ENCODE measurements at regions of chr15 and their contacts with region 1.

Region 1: GRCh38 chr15:28901987-28902745 is 16.4 kb downstream of the APBA2 start:
- DNase-seq: no peak
- ATAC-seq: no peak
- H3K4me3 Mint-ChIP-seq: peak overlapping the region in 6 of 10 donors; percentile 25 to 52 (median 40)
- H3K27ac Mint-ChIP-seq: peak overlapping the region in 9 of 10 donors; percentile 22 to 91 (median 76)
- H3K4me1 Mint-ChIP-seq: peaks cover 55 to 95% (median 89%) of the 10 kb centered on the region in 4 donors
- H3K27me3 Mint-ChIP-seq: no peaks in the 10 kb centered on the region

Region 2: DNA sequence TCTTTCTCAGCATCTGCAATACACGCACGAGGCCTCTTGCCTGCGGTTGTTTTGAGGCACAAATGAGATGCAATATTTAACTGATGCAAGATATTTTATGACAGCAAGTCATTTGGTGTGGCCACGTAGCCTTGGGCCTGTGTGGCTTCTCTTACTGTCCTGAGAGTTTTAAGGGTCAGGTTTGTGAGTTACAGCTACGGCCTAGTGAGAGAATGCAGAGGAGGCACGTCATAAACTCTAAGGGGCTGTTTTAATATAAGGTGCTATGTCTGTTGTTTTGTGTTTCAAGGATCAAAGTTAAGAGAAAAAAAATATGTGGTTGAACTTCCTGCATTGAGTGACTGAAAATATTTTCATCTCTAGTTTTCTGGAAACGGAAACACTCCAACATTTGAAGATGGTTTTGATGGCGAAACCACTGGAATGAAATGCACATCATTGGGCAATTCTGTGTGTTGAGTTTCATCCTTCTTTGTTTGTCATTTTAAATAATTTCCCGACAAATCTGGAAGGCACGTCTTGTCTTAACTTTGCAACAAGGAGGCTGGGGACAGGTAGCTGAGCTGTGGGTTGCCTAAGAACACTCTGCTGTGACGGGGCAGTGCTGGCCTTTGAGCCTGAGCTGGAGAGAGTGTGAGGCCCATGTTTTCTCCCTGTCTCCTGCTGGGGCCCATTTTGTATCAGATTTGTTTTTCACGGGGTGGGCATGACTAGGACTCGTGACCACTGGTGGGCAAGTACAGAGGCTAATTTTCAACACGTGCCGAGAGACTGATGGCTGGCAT is 11.3 kb before region 1 on chr15:
- POLR2A ChIA-PET with region 1: interaction called, 12 read pairs
- DNase-seq: peak in 7 of 10 donors; percentile 13 to 85 (median 41)
- ATAC-seq: peak; percentile 65 to 76
- H3K4me3 Mint-ChIP-seq: peak overlapping the region; percentile 66 to 96 (median 92)
- H3K27ac Mint-ChIP-seq: peak overlapping the region; percentile 96 to 100 (median 99)
- H3K4me1 Mint-ChIP-seq: peaks cover 58 to 88% (median 77%) of the 10 kb centered on the region in 4 donors
- H3K27me3 Mint-ChIP-seq: no peaks in the 10 kb centered on the region

Region 3: GRCh38 chr15:28929200-28929599 is 27.0 kb after region 1 on chr15:
- POLR2A ChIA-PET with region 1: no interaction called
- DNase-seq: no peak
- ATAC-seq: no peak
- H3K4me3 Mint-ChIP-seq: no peak overlapping the region
- H3K27ac Mint-ChIP-seq: peak overlapping the region in 6 of 10 donors; percentile 53 to 84 (median 70)
- H3K4me1 Mint-ChIP-seq: peaks cover 39 to 83% (median 67%) of the 10 kb centered on the region in 4 donors
- H3K27me3 Mint-ChIP-seq: no peaks in the 10 kb centered on the region

Measured in naive thymus-derived CD8-positive, alpha-beta T cell (primary cell).